Naive thymus-derived CD4-positive, alpha-beta T cell (primary cell): ENCODE measurements at regions of chr9 and their contacts with region 1.

Region 1: GRCh38 chr9:133335878-133336811 is at the start of gene SURF6:
- DNase-seq: peak; percentile 90 to 96 (median 93)
- ATAC-seq: peak; percentile 98
- H3K4me3 ChIP-seq: peak within 1 kb of the TSS; percentile 92
- H3K4me3 Mint-ChIP-seq: peak within 1 kb of the TSS; percentile 93 to 98 (median 96)
- H3K27ac ChIP-seq: peak within 1 kb of the TSS; percentile 82
- H3K27ac Mint-ChIP-seq: peak within 1 kb of the TSS; percentile 90 to 96 (median 94)
- H3K4me1 ChIP-seq: peaks cover 21 to 31% of the 10 kb centered on the region in 2 donors
- H3K4me1 Mint-ChIP-seq: peaks cover 22 to 59% (median 38%) of the 10 kb centered on the region in 7 donors
- H3K27me3 ChIP-seq: no peaks in the 10 kb centered on the region
- H3K27me3 Mint-ChIP-seq: no peaks in the 10 kb centered on the region
- total RNA-seq, gene SURF6: 15.4 to 33.5 (median 23.4) TPM

Region 2: DNA sequence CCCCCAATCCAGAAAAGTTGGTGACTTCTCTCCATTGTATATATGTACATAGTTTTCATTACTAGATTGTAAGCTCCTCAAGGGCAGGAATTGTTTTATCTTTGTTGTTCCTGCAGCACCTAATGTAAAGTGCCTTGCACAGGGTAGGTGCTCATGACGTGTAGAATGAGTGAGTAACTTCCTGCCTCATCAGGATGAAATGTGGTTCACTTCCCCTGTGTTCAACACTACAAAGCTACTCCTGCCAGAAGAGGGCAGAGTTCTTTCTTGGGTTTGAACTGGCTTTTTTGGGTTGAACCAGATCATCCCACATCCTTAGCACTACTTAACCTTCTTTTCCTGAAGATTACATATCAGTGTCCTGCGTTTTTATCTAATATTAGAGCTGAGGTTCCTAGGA is 642.0 kb before region 1 on chr9:
- CTCF ChIA-PET with region 1: no interaction called
- POLR2A ChIA-PET with region 1: no interaction called
- intact Hi-C with region 1: no loop called
- DNase-seq: peak in 5 of 9 donors; percentile 5 to 27 (median 15)
- ATAC-seq: peak; percentile 77
- H3K4me3 ChIP-seq: no peak overlapping the region
- H3K4me3 Mint-ChIP-seq: no peak overlapping the region
- H3K27ac ChIP-seq: no peak overlapping the region
- H3K27ac Mint-ChIP-seq: peak overlapping the region in 1 of 9 donors; percentile 4
- H3K4me1 ChIP-seq: no peaks in the 10 kb centered on the region
- H3K4me1 Mint-ChIP-seq: peaks cover 0 to 4% (median 2%) of the 10 kb centered on the region in 7 donors
- H3K27me3 ChIP-seq: no peaks in the 10 kb centered on the region
- H3K27me3 Mint-ChIP-seq: peaks cover 0 to 9% (median 5%) of the 10 kb centered on the region in 5 donors

Region 3: DNA sequence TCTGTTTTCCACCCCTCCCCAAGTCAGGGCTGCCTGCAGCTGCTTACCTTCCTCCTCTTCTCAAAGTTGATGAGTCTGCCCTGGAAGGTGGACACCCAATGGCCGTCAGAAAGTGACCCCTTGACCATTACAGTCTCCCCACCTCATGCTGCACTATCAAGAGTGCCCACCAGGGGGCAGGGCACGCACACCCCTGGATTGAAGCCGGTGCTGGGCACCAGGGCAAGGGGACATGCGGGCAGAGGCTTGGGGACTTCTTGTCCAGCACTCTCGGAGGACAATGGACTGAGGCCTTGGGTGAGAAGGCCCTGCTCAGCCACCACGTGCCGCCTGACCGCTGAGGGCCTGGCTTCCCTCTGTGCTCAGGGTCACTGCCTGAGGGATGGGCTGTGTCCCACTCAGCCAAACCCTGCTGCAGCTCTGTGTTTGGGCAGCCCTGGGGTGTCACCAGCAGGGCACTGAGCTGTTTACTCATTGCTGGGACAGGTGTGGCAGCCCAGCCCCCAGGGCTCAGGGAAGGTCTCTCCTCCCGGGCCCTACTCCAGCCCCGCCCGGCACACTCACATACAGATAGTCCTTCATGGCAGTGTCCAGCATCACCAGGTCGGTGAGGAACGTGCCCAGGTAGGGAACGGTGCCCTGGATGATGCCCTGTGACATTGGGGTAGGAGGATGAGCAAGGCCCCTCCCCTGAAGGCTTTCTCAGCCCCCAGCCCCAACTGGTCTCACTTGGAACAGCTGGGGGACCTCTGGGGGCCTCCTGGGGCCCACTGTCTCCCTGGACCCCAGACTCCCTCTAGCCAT is 232.8 kb before region 1 on chr9:
- CTCF ChIA-PET with region 1: no interaction called
- POLR2A ChIA-PET with region 1: no interaction called
- intact Hi-C with region 1: loop called in 1 of 2 experiments (anchors 2 kb)
- DNase-seq: peak in 8 of 9 donors; percentile 30 to 70 (median 53)
- ATAC-seq: peak; percentile 84
- H3K4me3 ChIP-seq: no peak overlapping the region
- H3K4me3 Mint-ChIP-seq: peak overlapping the region in 1 of 10 donors; percentile 45
- H3K27ac ChIP-seq: no peak overlapping the region
- H3K27ac Mint-ChIP-seq: peak overlapping the region in 6 of 9 donors; percentile 25 to 82 (median 60)
- H3K4me1 ChIP-seq: no peaks in the 10 kb centered on the region
- H3K4me1 Mint-ChIP-seq: peaks cover 0 to 4% (median 0%) of the 10 kb centered on the region in 7 donors
- H3K27me3 ChIP-seq: no peaks in the 10 kb centered on the region
- H3K27me3 Mint-ChIP-seq: no peaks in the 10 kb centered on the region

Region 4: DNA sequence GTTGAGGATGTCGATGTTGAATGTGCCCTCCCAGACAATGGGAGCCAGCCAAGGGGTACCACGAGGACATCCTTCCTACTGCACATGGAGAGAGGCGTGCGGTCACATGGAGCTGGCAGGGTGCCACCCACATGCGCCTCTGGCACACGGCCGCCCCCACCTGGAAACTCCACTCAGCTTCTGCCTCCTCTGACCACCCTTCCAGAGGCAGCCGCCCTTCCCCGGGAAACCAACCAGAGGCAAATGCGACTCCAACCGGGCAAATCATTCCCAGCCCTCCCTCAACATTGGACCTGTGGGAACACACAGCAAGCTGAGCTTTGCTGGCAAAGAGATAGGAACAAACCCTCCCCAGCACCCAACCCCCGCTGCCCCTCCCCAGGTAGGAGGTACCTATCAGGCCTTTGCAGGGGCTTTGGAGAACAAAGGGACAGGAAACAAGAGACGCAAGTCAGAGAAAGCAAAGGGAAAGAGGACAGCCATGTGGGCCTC is 78.6 kb before region 1 on chr9:
- CTCF ChIA-PET with region 1: no interaction called
- POLR2A ChIA-PET with region 1: no interaction called
- intact Hi-C with region 1: no loop called
- DNase-seq: no peak
- ATAC-seq: no peak
- H3K4me3 ChIP-seq: no peak overlapping the region
- H3K4me3 Mint-ChIP-seq: no peak overlapping the region
- H3K27ac ChIP-seq: no peak overlapping the region
- H3K27ac Mint-ChIP-seq: no peak overlapping the region
- H3K4me1 ChIP-seq: no peaks in the 10 kb centered on the region
- H3K4me1 Mint-ChIP-seq: peaks cover 0 to 11% (median 0%) of the 10 kb centered on the region in 7 donors
- H3K27me3 ChIP-seq: no peaks in the 10 kb centered on the region
- H3K27me3 Mint-ChIP-seq: peaks cover 0 to 14% (median 0%) of the 10 kb centered on the region in 5 donors

Region 5: DNA sequence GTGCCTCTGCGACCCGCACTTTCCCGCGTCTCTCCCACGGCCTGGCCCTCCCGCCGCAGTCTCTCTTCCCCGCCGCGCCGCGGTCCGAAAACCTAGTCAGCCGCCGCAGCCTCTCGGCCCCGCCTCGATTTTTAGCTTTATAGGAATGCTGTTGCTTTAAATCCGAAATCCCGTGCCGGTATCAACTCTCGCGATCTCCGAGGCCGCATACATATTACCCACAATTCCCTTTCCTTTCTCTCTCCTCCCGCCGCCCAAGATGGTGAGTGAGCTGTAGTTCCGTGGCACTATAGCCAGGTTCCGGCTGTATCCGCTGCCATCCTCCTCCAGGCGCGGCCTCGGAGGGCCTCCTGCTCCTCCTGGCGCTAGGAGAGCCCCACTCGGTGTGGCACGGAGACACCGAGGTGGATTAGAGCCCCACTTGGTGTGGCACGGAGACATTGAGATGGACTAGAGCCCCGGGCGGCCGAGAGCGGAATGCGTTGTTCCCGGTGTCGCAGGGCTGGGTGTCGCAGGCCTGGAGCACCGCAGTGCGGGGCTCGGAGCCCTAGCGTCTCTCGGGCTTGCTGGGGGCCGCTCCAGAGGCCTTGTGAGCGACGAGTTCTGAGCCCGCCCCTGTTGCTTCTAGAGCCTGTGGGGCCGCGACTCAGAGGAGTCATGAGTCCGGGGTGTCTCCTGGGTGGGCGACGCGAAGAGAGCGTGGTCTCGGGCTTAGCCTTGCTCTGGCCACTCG is 12.0 kb after region 1 on chr9 and contains the starts of genes MED22 and RPL7A:
- CTCF ChIA-PET with region 1: no interaction called
- POLR2A ChIA-PET with region 1: interaction called, 12 read pairs
- intact Hi-C with region 1: loop called (anchors 1 kb)
- DNase-seq: peak; percentile 72 to 95 (median 92)
- ATAC-seq: peak; percentile 95
- H3K4me3 ChIP-seq: peak within 1 kb of the TSS; percentile 93
- H3K4me3 Mint-ChIP-seq: peak within 1 kb of the TSS; percentile 94 to 100 (median 98)
- H3K27ac ChIP-seq: peak within 1 kb of the TSS; percentile 98
- H3K27ac Mint-ChIP-seq: peak within 1 kb of the TSS; percentile 87 to 99 (median 97)
- H3K4me1 ChIP-seq: peaks cover 19 to 20% of the 10 kb centered on the region in 2 donors
- H3K4me1 Mint-ChIP-seq: peaks cover 23 to 46% (median 39%) of the 10 kb centered on the region in 7 donors
- H3K27me3 ChIP-seq: no peaks in the 10 kb centered on the region
- H3K27me3 Mint-ChIP-seq: peaks cover 0 to 2% (median 0%) of the 10 kb centered on the region in 5 donors
- total RNA-seq, gene MED22: 26.5 to 44.6 (median 32.8) TPM
- total RNA-seq, gene RPL7A: 2,002 to 2,815 (median 2,428) TPM

Region 6: GRCh38 chr9:133417541-133418461 is 81.7 kb after region 1 on chr9 and contains the start of gene REXO4:
- CTCF ChIA-PET with region 1: no interaction called
- POLR2A ChIA-PET with region 1: no interaction called
- intact Hi-C with region 1: loop called in 1 of 2 experiments (anchors 1 kb)
- DNase-seq: peak; percentile 73 to 88 (median 84)
- ATAC-seq: peak; percentile 93
- H3K4me3 ChIP-seq: peak within 1 kb of the TSS; percentile 87
- H3K4me3 Mint-ChIP-seq: peak within 1 kb of the TSS; percentile 88 to 93 (median 91)
- H3K27ac ChIP-seq: peak within 1 kb of the TSS; percentile 80
- H3K27ac Mint-ChIP-seq: peak within 1 kb of the TSS; percentile 81 to 94 (median 91)
- H3K4me1 ChIP-seq: peaks cover 13 to 14% of the 10 kb centered on the region in 2 donors
- H3K4me1 Mint-ChIP-seq: peaks cover 32 to 60% (median 54%) of the 10 kb centered on the region in 7 donors
- H3K27me3 ChIP-seq: no peaks in the 10 kb centered on the region
- H3K27me3 Mint-ChIP-seq: peaks cover 0 to 3% (median 0%) of the 10 kb centered on the region in 5 donors
- total RNA-seq, gene REXO4: 17.8 to 44.1 (median 28.6) TPM

Region 7: GRCh38 chr9:133478851-133479711 is 142.9 kb after region 1 on chr9 and contains the start of gene SLC2A6:
- CTCF ChIA-PET with region 1: no interaction called
- POLR2A ChIA-PET with region 1: no interaction called
- intact Hi-C with region 1: loop called in 1 of 2 experiments (anchors 5 kb)
- DNase-seq: peak; percentile 64 to 87 (median 74)
- ATAC-seq: peak; percentile 96
- H3K4me3 ChIP-seq: peak within 1 kb of the TSS; percentile 77
- H3K4me3 Mint-ChIP-seq: peak within 1 kb of the TSS; percentile 50 to 83 (median 78)
- H3K27ac ChIP-seq: peak within 1 kb of the TSS; percentile 50
- H3K27ac Mint-ChIP-seq: peak within 1 kb of the TSS in 5 of 9 donors; percentile 48 to 83 (median 60)
- H3K4me1 ChIP-seq: peaks cover 0 to 12% of the 10 kb centered on the region in 2 donors
- H3K4me1 Mint-ChIP-seq: peaks cover 0 to 15% (median 10%) of the 10 kb centered on the region in 7 donors
- H3K27me3 ChIP-seq: no peaks in the 10 kb centered on the region
- H3K27me3 Mint-ChIP-seq: peaks cover 0 to 12% (median 0%) of the 10 kb centered on the region in 5 donors
- total RNA-seq, gene SLC2A6: 2.4 to 34.7 (median 3.6) TPM